Uterus (tissue), 4 donors: ENCODE measurements at regions of chr19 and their contacts with region 1.

Region 1: DNA sequence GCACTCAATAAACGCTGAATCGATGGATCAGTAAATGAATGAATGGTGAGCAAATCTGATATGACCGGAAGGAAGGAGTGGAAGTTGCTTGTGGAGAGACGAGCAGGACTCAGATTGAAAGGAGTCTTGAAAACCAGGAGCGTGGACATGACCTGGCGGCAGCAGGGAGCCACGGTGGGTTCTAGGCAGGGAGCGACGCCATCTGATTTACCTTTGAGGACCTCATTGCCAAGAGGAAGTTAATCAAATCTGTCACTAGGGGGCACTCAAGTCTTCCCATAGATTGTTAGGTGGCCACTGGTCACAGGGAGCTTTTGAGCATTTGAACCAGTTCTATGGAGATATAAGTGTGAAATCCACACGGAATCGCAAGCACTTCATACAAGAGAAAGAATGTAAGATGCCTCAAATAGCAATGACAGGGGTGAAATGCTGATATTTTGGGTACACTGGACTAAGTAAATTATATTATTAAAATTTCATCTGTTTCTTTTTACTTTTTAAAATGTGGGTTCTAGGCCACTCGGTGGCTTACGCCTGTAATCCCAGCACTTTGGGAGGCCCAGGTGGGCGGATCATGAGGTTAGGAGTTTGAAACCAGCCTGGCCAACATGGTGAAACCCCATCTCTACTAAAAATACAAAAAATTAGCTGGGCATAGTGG is 9.2 kb upstream of the FBN3 start:
- DNase-seq: peak in 1 of 2 donors; percentile 42
- H3K4me3 ChIP-seq: no peak overlapping the region
- H3K27ac ChIP-seq: no peak overlapping the region
- H3K4me1 ChIP-seq: no peaks in the 10 kb centered on the region
- H3K27me3 ChIP-seq: no peaks in the 10 kb centered on the region
- CTCF ChIP-seq: peak; percentile 49 to 65 (median 58)
- POLR2A ChIP-seq: no peak

Region 2: GRCh38 chr19:8252922-8253589 is 94.5 kb after region 1 on chr19:
- intact Hi-C with region 1: loop called (anchors 5 kb)
- DNase-seq: peak; percentile 81 to 85
- H3K4me3 ChIP-seq: no peak overlapping the region
- H3K27ac ChIP-seq: no peak overlapping the region
- H3K4me1 ChIP-seq: peaks cover 0 to 10% of the 10 kb centered on the region in 2 donors
- H3K27me3 ChIP-seq: no peaks in the 10 kb centered on the region
- CTCF ChIP-seq: peak; percentile 93 to 96 (median 94)
- POLR2A ChIP-seq: no peak

Region 3: GRCh38 chr19:8269724-8270123 is 111.2 kb after region 1 on chr19:
- intact Hi-C with region 1: no loop called
- DNase-seq: no peak
- H3K4me3 ChIP-seq: no peak overlapping the region
- H3K27ac ChIP-seq: no peak overlapping the region
- H3K4me1 ChIP-seq: no peaks in the 10 kb centered on the region
- H3K27me3 ChIP-seq: no peaks in the 10 kb centered on the region
- CTCF ChIP-seq: no peak
- POLR2A ChIP-seq: no peak